ENCODE measurements at regions of chr5 and their contacts with region 1.

Region 1: GRCh38 chr5:172770675-172771438 is at the start of gene DUSP1:
- DNase-seq: peak; percentile 100
- ATAC-seq: peak; percentile 64 to 69 (median 66)
- H3K4me3 ChIP-seq: peak within 1 kb of the TSS; percentile 79
- H3K27ac ChIP-seq: peak within 1 kb of the TSS; percentile 98
- H3K4me1 ChIP-seq: peaks cover 46% of the 10 kb centered on the region
- H3K27me3 ChIP-seq: no peaks in the 10 kb centered on the region
- CTCF ChIP-seq: peak; percentile 57
- total RNA-seq, gene DUSP1: 89.0 to 287 (median 164) TPM

Region 2: DNA sequence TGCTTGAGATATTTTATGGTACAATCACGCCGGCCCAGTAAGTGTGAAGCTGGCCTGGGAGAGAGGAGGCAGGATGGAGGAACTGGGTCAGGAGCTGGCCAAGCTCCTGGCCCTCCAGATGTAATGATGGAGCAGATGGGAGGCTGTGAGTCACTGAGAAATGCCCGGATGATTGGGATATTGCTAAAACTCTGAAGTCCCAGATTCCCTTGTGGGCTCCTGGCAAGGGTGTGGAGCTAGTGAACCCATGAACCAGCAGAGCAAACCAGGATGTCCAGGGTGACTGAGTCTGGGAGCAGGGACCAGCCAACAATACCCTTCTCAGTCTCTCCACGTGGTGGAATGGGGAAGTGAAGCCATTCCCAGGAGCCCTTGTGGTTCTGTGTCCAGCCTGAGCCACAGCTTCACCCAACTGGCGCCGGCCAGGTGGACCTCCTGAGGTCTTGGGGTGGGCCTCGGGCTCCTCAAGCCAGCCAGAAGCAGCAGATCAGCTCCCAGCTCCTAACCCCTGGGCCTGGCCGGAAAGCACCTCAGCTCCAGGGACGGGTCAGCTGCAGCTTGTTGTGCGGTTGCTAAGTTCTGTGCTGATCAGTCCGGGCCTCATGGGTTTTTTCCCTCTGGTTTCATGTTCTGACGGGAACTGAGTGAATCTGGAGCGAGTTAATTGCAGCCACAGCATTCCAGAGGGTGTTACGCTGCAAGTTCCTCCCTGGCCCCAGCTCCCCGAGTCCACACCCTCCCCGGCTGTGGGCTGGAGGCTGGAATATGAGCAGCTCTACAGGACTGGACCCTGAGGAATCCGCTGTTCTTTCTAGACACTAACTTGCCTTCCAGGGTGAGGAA is 37.5 kb before region 1 on chr5:
- intact Hi-C with region 1: no loop called
- DNase-seq: peak; percentile 86 to 89
- ATAC-seq: peak; percentile 71 to 81 (median 75)
- H3K4me3 ChIP-seq: no peak overlapping the region
- H3K27ac ChIP-seq: peak overlapping the region; percentile 79
- H3K4me1 ChIP-seq: peaks cover 13% of the 10 kb centered on the region
- H3K27me3 ChIP-seq: no peaks in the 10 kb centered on the region
- CTCF ChIP-seq: no peak

Region 3: DNA sequence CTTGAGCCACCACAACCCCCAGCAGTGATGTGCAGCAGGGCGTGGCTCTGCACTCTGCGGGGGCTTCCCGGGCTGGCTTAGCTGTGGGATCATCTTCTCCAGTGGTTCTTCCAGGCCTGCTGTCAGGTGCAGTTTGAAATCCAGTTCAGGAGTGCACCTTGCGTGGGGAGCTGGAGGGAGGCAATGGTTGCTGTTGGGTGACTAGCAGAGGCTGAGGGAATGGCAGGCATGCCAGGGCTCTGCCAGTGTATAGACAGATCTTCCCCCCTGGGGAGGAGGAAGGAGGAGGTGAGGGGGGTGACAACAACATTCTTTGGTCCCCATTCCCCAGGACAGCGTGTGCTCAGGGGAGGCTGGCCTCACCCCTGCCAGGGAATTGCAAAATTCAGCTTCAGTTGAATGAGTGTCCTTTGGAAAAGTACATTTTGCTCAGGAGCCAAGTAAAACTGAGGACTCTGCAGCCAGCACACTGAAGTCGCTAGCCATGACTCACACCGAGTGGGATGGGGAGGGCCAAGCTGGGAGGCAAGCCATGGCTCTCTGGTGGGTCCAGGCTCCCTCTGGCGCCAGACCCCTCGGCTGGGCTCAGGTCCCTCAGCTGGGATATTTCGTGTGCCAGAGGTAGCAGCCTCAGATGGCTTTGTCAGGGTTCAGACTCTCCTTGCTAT is 98.2 kb after region 1 on chr5:
- intact Hi-C with region 1: loop called (anchors 2 to 5 kb)
- DNase-seq: peak; percentile 90 to 95
- ATAC-seq: peak; percentile 67 to 81 (median 76)
- H3K4me3 ChIP-seq: peak overlapping the region; percentile 5
- H3K27ac ChIP-seq: peak overlapping the region; percentile 95
- H3K4me1 ChIP-seq: peaks cover 94% of the 10 kb centered on the region
- H3K27me3 ChIP-seq: no peaks in the 10 kb centered on the region
- CTCF ChIP-seq: peak; percentile 8